CD4-positive, alpha-beta T cell (primary cell): ENCODE measurements at regions of chr11 and their contacts with region 1.

Region 1: DNA sequence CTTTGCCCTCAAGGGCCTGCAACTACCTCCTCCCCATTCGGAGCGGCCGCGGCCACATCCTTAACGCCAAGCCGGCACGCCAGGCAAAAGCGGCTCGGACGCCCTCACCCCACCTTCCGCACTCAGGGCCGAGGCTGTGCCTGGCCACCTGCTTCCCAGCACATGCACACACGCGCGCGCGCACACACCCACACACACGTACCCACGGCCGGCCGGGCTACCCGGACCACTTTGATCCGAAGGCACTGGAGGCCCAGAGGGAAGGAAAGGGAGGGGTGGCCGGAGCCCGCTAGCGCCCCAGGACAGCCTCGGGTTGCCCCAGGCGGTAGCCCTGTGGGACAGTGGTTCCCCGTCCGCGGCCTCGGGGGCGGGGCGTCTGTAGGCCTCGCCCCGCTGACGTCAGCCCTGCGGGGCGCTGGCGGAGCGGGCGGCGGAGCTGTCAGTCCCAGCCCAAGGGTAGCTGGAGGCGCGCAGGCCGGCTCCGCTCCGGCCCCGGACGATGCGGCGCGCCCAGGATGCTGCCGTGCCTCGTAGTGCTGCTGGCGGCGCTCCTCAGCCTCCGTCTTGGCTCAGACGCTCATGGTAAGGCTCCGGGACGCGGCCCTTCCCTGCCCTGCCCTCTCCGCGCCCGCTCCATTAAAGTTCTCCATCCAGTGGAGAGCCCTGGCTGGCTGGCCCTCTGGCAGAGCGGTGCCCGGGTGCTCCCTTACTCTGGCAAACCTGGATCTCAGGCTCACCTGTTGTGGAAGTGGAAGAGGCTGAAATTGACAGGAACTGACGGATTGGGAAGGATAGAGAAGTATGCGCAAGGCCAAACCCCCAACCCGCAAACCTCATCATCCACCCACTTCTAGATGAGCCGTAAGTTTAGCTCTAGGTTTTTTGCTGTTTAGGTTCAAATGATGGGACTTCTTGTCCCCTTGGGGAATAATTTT is at the start of gene IL10RA:
- DNase-seq: peak; percentile 57 to 93 (median 78)
- ATAC-seq: peak; percentile 72
- H3K4me3 ChIP-seq: peak within 1 kb of the TSS; percentile 98
- H3K4me3 Mint-ChIP-seq: peak within 1 kb of the TSS; percentile 90
- H3K27ac ChIP-seq: peak within 1 kb of the TSS; percentile 88 to 93
- H3K27ac Mint-ChIP-seq: peak within 1 kb of the TSS; percentile 87
- H3K4me1 ChIP-seq: peaks cover 66% of the 10 kb centered on the region
- H3K4me1 Mint-ChIP-seq: peaks cover 72% of the 10 kb centered on the region
- H3K27me3 ChIP-seq: no peaks in the 10 kb centered on the region
- H3K27me3 Mint-ChIP-seq: no peaks in the 10 kb centered on the region
- CTCF ChIP-seq: no peak
- total RNA-seq, gene IL10RA: 193 to 203 TPM

Region 2: DNA sequence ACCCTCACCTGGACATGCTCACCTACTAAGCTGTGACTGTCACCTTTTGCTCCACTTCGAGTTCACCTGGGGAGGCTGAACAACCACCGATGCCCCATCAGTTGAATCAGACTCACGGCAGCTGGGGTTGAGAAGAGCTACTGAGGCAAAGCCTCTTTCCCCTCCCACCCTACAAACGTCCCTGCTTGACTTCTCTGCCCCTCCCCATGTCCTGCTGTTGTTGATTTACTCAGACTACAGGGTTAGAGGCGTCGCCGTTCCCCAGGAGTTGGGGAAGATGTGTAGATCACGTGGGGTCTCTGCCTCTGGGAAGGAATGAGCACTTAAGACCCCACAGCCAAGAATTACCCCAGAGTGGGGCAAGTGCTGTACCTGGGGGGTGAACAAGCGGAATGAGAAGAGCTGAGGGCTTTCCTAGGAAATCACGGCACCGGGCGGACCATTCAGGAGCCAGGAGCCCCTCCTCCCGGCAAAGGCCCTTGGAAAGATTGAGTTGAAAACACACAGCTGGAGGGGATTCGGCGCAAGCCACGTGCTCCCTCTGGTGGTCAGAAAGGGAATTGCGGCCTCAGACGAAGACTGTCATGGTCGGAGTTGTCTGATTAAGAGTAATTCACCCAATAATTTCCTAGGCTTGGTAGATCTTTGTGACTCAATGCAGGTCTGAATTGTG is 168.7 kb before region 1 on chr11:
- CTCF ChIA-PET with region 1: no interaction called
- POLR2A ChIA-PET with region 1: no interaction called
- intact Hi-C with region 1: loop called in 1 of 2 experiments (anchors 5 kb)
- DNase-seq: peak; percentile 70 to 92 (median 84)
- ATAC-seq: peak; percentile 16
- H3K4me3 ChIP-seq: no peak overlapping the region
- H3K4me3 Mint-ChIP-seq: peak overlapping the region; percentile 38
- H3K27ac ChIP-seq: no peak overlapping the region
- H3K27ac Mint-ChIP-seq: peak overlapping the region; percentile 87
- H3K4me1 ChIP-seq: peaks cover 67% of the 10 kb centered on the region
- H3K4me1 Mint-ChIP-seq: peaks cover 50% of the 10 kb centered on the region
- H3K27me3 ChIP-seq: no peaks in the 10 kb centered on the region
- H3K27me3 Mint-ChIP-seq: no peaks in the 10 kb centered on the region
- CTCF ChIP-seq: peak; percentile 97

Region 3: DNA sequence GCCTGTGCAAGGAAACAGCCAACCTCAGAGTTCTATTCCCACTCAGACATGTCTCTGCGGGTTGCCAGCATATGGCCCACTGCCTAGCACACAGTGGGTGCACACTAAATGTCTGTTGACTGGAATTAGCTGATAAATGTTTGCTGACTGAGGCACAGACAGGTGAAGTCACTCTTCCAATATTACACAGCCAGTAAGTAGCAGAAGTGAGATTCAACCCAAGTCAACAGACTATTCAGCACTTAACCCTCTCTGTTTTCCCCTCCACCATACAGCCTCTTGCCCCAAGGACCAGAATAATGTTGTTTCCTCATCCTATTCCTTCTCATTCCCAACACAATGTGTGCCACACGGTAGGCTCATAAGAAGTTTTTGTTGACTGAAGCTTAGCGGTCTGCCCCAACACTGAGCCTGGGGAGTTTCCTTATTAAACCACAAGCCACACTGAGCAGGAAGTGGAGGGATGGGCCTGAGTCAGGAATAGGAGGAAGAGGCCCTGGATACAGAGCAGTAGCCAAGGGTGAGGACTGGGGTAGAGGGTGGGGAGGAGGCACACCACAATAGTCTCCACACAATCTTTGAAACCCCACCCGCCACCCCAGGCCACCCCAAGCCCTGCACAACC is 15.7 kb before region 1 on chr11:
- CTCF ChIA-PET with region 1: interaction called, 6 read pairs
- POLR2A ChIA-PET with region 1: interaction called, 10 read pairs
- intact Hi-C with region 1: no loop called
- DNase-seq: peak in 5 of 14 experiments; percentile 33 to 79 (median 71)
- ATAC-seq: peak; percentile 79
- H3K4me3 ChIP-seq: no peak overlapping the region
- H3K4me3 Mint-ChIP-seq: peak overlapping the region; percentile 44
- H3K27ac ChIP-seq: no peak overlapping the region
- H3K27ac Mint-ChIP-seq: peak overlapping the region; percentile 42
- H3K4me1 ChIP-seq: peaks cover 59% of the 10 kb centered on the region
- H3K4me1 Mint-ChIP-seq: peaks cover 69% of the 10 kb centered on the region
- H3K27me3 ChIP-seq: no peaks in the 10 kb centered on the region
- H3K27me3 Mint-ChIP-seq: no peaks in the 10 kb centered on the region
- CTCF ChIP-seq: no peak

Region 4: GRCh38 chr11:118002541-118003423 is 16.6 kb after region 1 on chr11:
- CTCF ChIA-PET with region 1: interaction called, 6 read pairs
- POLR2A ChIA-PET with region 1: interaction called, 392 read pairs
- intact Hi-C with region 1: loop called in 1 of 2 experiments (anchors 2 kb)
- DNase-seq: peak in 10 of 14 experiments; percentile 29 to 70 (median 48)
- ATAC-seq: peak; percentile 48
- H3K4me3 ChIP-seq: peak overlapping the region; percentile 10
- H3K4me3 Mint-ChIP-seq: peak overlapping the region; percentile 82
- H3K27ac ChIP-seq: peak overlapping the region; percentile 72 to 76
- H3K27ac Mint-ChIP-seq: peak overlapping the region; percentile 84
- H3K4me1 ChIP-seq: peaks cover 99% of the 10 kb centered on the region
- H3K4me1 Mint-ChIP-seq: peaks cover 92% of the 10 kb centered on the region
- H3K27me3 ChIP-seq: no peaks in the 10 kb centered on the region
- H3K27me3 Mint-ChIP-seq: no peaks in the 10 kb centered on the region
- CTCF ChIP-seq: no peak

Region 5: DNA sequence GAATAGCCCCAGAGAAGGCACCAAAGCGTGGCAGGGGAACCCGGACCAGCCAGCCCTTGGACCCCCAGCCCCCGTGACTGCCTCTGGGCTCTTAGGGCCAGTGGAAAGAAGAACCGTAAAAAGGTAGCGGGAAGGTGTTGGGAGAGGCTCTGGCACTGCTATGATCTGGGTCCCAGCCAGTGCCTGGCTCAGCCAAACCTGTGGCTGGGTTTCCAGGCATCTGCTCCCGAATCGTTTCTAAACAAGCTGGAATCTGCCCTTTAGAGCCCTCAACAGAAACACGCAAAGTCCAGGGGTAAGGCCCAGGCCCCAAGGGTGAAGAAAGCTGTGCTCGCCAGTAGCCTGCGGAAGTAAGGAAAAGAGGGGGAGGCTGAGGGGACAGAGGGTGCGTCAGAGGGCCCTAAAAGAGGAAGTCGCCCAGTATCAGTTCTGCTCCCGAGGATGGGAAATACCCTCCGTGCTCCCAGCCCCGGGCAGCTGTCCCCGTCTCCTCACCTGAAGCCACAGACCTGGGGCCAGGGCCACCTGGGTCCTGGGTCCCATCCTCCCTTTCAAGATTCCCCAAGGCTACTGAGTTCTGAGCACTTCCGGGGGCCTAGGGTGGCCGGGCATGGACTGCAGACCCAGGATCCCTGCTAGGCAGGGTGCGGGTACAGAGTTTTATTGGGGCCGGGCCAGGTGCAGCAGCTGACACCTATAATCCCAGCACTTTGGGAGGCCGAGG is 24.7 kb after region 1 on chr11:
- CTCF ChIA-PET with region 1: interaction called, 3 read pairs
- POLR2A ChIA-PET with region 1: interaction called, 392 read pairs
- intact Hi-C with region 1: no loop called
- DNase-seq: peak in 3 of 14 experiments; percentile 48 to 76 (median 67)
- ATAC-seq: no peak
- H3K4me3 ChIP-seq: no peak overlapping the region
- H3K4me3 Mint-ChIP-seq: no peak overlapping the region
- H3K27ac ChIP-seq: peak overlapping the region; percentile 9 to 79
- H3K27ac Mint-ChIP-seq: peak overlapping the region; percentile 83
- H3K4me1 ChIP-seq: peaks cover 99% of the 10 kb centered on the region
- H3K4me1 Mint-ChIP-seq: peaks cover 95% of the 10 kb centered on the region
- H3K27me3 ChIP-seq: no peaks in the 10 kb centered on the region
- H3K27me3 Mint-ChIP-seq: no peaks in the 10 kb centered on the region
- CTCF ChIP-seq: no peak

Region 6: GRCh38 chr11:118046051-118046963 is 60.1 kb after region 1 on chr11:
- CTCF ChIA-PET with region 1: no interaction called
- POLR2A ChIA-PET with region 1: interaction called, 87 read pairs
- intact Hi-C with region 1: loop called (anchors 1 to 2 kb)
- DNase-seq: peak in 11 of 14 experiments; percentile 25 to 84 (median 44)
- ATAC-seq: peak; percentile 83
- H3K4me3 ChIP-seq: no peak overlapping the region
- H3K4me3 Mint-ChIP-seq: peak overlapping the region; percentile 69
- H3K27ac ChIP-seq: peak overlapping the region; percentile 71 to 76
- H3K27ac Mint-ChIP-seq: peak overlapping the region; percentile 95
- H3K4me1 ChIP-seq: peaks cover 80% of the 10 kb centered on the region
- H3K4me1 Mint-ChIP-seq: peaks cover 93% of the 10 kb centered on the region
- H3K27me3 ChIP-seq: no peaks in the 10 kb centered on the region
- H3K27me3 Mint-ChIP-seq: no peaks in the 10 kb centered on the region
- CTCF ChIP-seq: no peak

Region 7: DNA sequence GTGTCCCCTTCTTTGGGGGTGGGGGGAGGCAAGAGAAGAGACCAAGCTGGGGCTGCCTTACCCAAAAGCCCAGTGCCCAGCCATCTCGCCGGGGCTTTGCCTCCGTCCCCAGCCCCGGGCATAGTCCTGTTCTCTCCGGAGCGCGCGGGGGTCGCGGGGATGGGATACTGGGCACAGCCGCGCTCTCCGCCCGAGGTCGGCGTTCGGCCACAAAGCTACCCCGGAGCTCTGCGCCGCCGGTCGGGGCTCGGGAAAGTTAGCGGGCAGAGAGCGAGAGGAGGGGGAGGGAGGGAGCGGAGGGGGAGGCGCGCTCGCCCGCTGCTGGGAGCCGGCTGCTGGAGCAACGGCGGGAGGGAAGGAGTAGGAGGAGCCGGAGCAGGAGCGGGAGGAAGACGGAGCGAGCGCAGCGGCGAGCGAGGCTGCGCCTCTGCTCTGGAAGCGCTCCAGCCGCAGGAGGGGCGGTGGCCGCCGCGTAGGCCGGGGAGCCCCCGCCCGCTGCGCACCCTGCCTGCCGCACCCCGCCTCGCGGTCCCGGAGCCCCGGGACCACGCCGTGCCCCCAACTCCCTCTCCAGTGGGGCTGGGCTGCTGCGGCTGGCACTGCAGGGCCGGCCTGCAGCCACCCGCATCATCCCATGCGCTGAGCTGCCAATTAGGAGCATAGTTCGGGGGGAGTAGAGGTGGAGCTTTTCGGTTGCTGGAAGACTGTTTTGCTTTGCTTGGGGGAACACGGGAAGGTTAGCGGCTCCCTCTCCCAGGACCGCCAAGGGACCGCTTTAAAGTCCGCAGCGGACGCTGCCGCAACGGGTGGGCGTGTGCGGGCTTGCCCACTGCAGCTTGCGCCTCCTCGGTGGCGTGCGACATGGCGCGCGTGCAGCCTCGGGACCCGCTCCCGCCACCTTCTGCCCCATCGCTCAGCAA is 166.6 kb after region 1 on chr11 and contains the start of gene SCN4B:
- CTCF ChIA-PET with region 1: no interaction called
- POLR2A ChIA-PET with region 1: no interaction called
- intact Hi-C with region 1: no loop called
- DNase-seq: peak in 4 of 14 experiments; percentile 9 to 48 (median 32)
- ATAC-seq: peak; percentile 47
- H3K4me3 ChIP-seq: peak within 1 kb of the TSS; percentile 22
- H3K4me3 Mint-ChIP-seq: peak within 1 kb of the TSS; percentile 21
- H3K27ac ChIP-seq: no peak within 1 kb of the TSS
- H3K27ac Mint-ChIP-seq: no peak within 1 kb of the TSS
- H3K4me1 ChIP-seq: peaks cover 24% of the 10 kb centered on the region
- H3K4me1 Mint-ChIP-seq: peaks cover 16% of the 10 kb centered on the region
- H3K27me3 ChIP-seq: peaks cover 61 to 71% of the 10 kb centered on the region in 2 experiments
- H3K27me3 Mint-ChIP-seq: peaks cover 81% of the 10 kb centered on the region
- CTCF ChIP-seq: no peak
- total RNA-seq, gene SCN4B: not detected